B cell (primary cell): ENCODE measurements at regions of chr17 and their contacts with region 1.

Region 1: DNA sequence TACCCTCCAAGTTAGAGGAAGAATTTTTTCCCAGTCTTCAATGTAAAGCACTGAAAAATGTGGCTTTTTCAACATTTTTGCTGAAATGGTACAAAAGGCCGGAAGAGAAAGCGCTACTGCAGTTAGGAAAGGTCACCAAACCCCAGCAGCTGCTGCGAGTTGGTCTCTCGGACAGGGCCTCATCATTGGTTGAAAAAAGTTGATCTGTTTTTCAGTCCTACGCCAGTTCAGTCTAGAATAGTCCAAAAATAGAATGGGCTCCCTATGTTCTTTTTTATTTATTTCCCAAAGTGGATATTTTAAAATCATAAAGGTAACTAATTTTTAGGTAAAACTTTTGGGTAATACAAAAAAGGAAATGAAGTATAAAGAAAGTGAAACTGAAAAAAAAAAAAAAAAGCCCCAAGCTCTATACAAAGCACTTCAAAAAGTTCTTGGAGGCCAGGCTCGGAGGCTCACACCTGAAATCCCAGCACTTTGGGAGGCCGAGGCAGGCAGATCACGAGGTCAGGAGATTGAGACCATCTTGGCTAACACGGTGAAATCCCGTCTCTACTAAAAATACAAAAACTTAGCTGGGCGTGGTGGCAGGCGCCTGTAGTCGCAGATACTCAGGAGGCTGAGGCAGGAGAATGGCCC is 17.4 kb downstream of the ADAP2 start:
- DNase-seq: peak; percentile 58
- ATAC-seq: peak; percentile 60
- H3K4me3 ChIP-seq: peak overlapping the region in 2 of 5 experiments; percentile 30 to 50
- H3K4me3 Mint-ChIP-seq: peak overlapping the region; percentile 64
- H3K27ac ChIP-seq: peak overlapping the region; percentile 66 to 79
- H3K27ac Mint-ChIP-seq: peak overlapping the region; percentile 89
- H3K4me1 ChIP-seq: peaks cover 7 to 12% of the 10 kb centered on the region in 2 donors
- H3K4me1 Mint-ChIP-seq: peaks cover 12% of the 10 kb centered on the region
- H3K27me3 ChIP-seq: no peaks in the 10 kb centered on the region
- H3K27me3 Mint-ChIP-seq: no peaks in the 10 kb centered on the region
- CTCF ChIP-seq: no peak

Region 2: DNA sequence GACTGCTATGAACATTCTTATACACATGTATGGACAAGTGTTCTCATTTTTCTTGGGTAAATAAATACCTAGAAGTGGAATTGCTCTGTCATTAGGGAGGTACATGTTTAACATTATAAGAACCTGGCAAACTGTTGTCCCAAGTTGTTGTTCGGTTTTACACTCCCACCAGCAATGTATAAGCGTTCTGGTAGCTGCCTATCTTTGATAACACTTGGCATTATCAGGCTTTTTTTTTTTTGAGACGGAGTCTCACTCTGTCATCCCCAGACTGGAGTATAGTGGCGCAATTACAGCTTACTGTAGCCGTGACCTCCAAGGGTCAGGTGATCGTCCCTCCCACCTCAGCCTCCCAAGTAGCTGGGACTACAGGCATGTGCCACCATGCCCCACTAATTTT is 91.1 kb before region 1 on chr17:
- CTCF ChIA-PET with region 1: no interaction called
- POLR2A ChIA-PET with region 1: no interaction called
- intact Hi-C with region 1: no loop called
- DNase-seq: no peak
- ATAC-seq: no peak
- H3K4me3 ChIP-seq: no peak overlapping the region
- H3K4me3 Mint-ChIP-seq: no peak overlapping the region
- H3K27ac ChIP-seq: no peak overlapping the region
- H3K27ac Mint-ChIP-seq: no peak overlapping the region
- H3K4me1 ChIP-seq: no peaks in the 10 kb centered on the region
- H3K4me1 Mint-ChIP-seq: no peaks in the 10 kb centered on the region
- H3K27me3 ChIP-seq: no peaks in the 10 kb centered on the region
- H3K27me3 Mint-ChIP-seq: no peaks in the 10 kb centered on the region
- CTCF ChIP-seq: no peak

Region 3: DNA sequence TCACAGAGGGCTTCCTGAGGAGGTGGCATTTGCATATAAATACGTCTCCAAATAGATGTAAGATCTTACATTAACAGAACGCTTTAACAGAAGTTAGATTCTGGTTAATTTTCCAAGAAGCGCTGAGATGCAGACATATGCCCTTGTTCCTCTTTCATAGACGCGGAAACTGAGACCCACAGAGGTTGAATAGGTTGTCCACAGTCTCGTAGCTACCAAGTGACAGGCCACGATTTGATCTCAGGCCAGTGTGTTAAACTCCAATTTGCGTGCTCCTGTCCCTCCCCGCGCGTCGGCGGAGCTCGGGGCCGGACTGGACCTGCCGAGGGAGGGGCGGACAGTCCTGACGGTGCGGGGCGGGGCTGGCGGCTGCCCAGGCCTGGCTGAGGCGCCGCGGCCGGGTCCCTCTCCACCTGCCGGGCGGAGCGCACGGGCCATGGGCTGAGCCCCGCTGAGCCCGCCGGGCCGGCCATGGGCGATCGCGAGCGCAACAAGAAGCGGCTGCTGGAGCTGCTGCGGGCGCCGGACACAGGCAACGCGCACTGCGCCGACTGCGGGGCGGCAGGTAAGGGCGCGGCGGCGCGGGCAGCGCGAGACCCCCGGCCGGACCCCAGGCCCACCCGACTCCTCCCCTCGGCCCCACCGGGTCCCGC is 17.5 kb before region 1 on chr17 and contains the start of gene ADAP2:
- CTCF ChIA-PET with region 1: no interaction called
- POLR2A ChIA-PET with region 1: interaction called, 3 read pairs
- intact Hi-C with region 1: loop called (anchors 2 kb)
- DNase-seq: peak; percentile 70
- ATAC-seq: peak; percentile 72
- H3K4me3 ChIP-seq: peak within 1 kb of the TSS; percentile 61 to 96 (median 72)
- H3K4me3 Mint-ChIP-seq: peak within 1 kb of the TSS; percentile 99
- H3K27ac ChIP-seq: peak within 1 kb of the TSS in 1 of 2 donors; percentile 41
- H3K27ac Mint-ChIP-seq: peak within 1 kb of the TSS; percentile 95
- H3K4me1 ChIP-seq: peaks cover 11 to 17% of the 10 kb centered on the region in 2 donors
- H3K4me1 Mint-ChIP-seq: peaks cover 16% of the 10 kb centered on the region
- H3K27me3 ChIP-seq: peaks cover 0 to 6% (median 0%) of the 10 kb centered on the region in 4 experiments
- H3K27me3 Mint-ChIP-seq: no peaks in the 10 kb centered on the region
- CTCF ChIP-seq: no peak
- total RNA-seq, gene ADAP2: 11.6 and 14.6 TPM in 2 replicates